Left cardiac atrium (tissue), 4 donors: ENCODE measurements at regions of chr16 and their contacts with region 1.

Region 1: GRCh38 chr16:788394-789126 is at the start of gene CHTF18:
- DNase-seq: peak; percentile 91
- ATAC-seq: peak; percentile 88 to 96
- total RNA-seq, gene CHTF18: 4.7 to 8.8 TPM

Region 2: DNA sequence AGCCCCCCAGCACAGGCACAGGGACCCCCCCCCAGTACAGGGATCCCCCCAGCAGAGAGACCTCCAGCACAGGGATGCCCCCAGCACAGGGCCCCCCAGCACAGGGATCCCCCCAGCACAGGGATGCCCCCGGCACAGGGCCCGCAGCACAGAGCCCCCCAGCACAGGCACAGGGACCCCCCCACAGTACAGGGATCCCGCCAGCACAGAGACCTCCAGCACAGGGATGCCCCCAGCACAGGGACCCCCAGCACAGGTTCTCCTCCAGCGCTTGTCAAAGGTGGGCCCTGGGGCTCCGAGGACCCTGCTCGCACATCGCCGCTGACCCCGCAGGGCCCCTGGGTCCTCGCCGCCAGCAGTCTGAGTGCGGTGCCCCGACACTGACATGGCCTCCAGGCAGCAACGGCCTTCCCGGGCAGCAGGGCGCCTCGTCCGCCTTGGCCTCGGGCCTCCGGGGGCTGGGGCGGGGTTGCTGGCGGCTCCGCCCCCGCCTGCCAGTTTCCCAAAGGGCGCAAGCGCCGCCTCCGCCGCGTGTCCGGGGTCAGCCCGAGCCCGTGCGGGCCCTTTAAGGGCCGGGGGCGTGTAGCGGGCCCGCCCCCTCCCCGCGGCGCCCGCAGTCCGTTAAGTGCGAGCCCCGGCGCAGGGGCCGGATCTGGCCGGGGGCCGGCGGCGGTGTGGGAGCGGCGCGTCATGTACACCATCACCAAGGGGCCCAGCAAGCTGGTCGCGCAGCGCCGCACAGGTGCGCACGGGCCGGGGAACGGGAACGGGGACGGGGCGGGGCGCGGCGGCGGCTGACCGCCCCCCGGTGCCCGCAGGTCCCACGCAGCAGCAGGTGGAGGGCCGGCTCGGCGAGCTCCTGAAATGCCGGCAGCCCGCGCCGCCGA is 147.0 kb before region 1 on chr16 and contains the start of gene MCRIP2:
- intact Hi-C with region 1: no loop called
- DNase-seq: peak; percentile 92
- ATAC-seq: peak; percentile 70 to 71
- total RNA-seq, gene MCRIP2: 92.8 to 117 TPM

Region 3: DNA sequence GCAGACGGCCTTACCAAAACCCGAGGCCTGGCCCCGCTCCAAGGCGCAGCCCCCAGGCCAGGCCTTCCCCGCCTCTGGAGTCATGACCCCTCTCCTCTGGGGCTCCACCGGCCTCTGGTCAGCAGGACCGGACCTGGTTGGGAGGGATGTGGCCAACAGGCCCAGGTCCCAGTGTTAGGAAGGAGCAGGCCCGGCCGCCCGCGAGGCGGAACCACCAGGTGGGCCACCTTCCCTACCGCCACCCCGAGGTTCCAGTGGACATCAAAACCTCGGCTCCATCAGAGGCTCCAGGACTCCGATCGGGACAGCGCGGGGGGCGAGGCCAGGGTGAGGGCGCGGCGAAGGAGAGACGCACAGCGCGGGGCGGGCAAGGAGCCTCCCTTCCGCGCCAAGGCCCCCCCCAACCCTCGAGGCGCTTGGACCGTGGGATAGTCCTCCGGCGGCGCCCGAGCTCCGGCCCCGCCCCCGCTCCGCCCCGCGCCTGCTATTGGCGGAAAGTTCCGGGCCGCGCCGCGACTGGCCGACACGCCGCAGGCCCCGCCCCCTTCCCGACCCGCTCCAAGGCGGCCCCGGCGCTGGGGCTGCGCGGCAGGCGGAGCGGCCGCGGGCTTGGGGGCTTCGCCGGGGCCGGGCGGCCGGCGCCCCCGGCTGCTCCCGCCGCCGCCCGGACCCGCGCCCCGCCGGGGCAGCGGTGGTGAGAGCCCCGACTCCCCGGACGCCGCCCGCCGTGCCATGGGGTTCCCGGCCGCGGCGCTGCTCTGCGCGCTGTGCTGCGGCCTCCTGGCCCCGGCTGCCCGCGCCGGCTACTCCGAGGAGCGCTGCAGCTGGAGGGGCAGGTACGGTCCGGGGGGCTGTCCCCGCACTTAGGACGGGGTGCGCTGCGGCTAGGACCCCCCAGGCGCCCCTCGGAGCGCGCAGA is 73.7 kb before region 1 on chr16 and contains the start of gene METRN:
- intact Hi-C with region 1: loop called (anchors 1 to 5 kb)
- DNase-seq: peak; percentile 95
- ATAC-seq: peak; percentile 85 to 95
- total RNA-seq, gene METRN: 53.7 to 56.8 TPM